Dorsolateral prefrontal cortex (tissue), 120 donors: ENCODE measurements at regions of chr9 and their contacts with region 1.

Region 1: GRCh38 chr9:135914921-135915320 is 7.6 kb upstream of the CAMSAP1 start:
- DNase-seq: peak in 1 of 10 donors; percentile 8
- H3K4me3 ChIP-seq: no peak overlapping the region
- H3K27ac ChIP-seq: no peak overlapping the region
- H3K27me3 ChIP-seq: no peaks in the 10 kb centered on the region
- CTCF ChIP-seq: no peak

Region 2: GRCh38 chr9:135951889-135952663 is 37.2 kb after region 1 on chr9:
- intact Hi-C with region 1: loop called in 1 of 2 experiments (anchors 5 kb)
- DNase-seq: no peak
- H3K4me3 ChIP-seq: no peak overlapping the region
- H3K27ac ChIP-seq: no peak overlapping the region
- H3K27me3 ChIP-seq: no peaks in the 10 kb centered on the region
- CTCF ChIP-seq: no peak